Activated CD4-positive, alpha-beta T cell treated with anti-CD3 and anti-CD28 coated beads for 36 hours (primary cell): ENCODE measurements at regions of chr7 and their contacts with region 1.

Region 1: GRCh38 chr7:129271500-129272355 is 46.9 kb downstream of the AHCYL2 start:
- DNase-seq: peak; percentile 76
- ATAC-seq: peak; percentile 97
- H3K4me3 Mint-ChIP-seq: no peak overlapping the region
- H3K27ac Mint-ChIP-seq: peak overlapping the region; percentile 53
- H3K4me1 Mint-ChIP-seq: peaks cover 6% of the 10 kb centered on the region
- H3K27me3 Mint-ChIP-seq: no peaks in the 10 kb centered on the region

Region 2: GRCh38 chr7:128791121-128791961 is 480.4 kb before region 1 on chr7:
- CTCF ChIA-PET with region 1: no interaction called
- POLR2A ChIA-PET with region 1: no interaction called
- intact Hi-C with region 1: no loop called
- DNase-seq: peak; percentile 88
- ATAC-seq: peak; percentile 91
- H3K4me3 Mint-ChIP-seq: peak overlapping the region; percentile 75
- H3K27ac Mint-ChIP-seq: peak overlapping the region; percentile 28
- H3K4me1 Mint-ChIP-seq: peaks cover 5% of the 10 kb centered on the region
- H3K27me3 Mint-ChIP-seq: peaks cover 9% of the 10 kb centered on the region

Region 3: GRCh38 chr7:129169171-129169671 is 102.5 kb before region 1 on chr7:
- CTCF ChIA-PET with region 1: interaction called, 8 read pairs
- POLR2A ChIA-PET with region 1: no interaction called
- intact Hi-C with region 1: loop called (anchors 2 to 5 kb)
- DNase-seq: peak; percentile 55
- ATAC-seq: peak; percentile 60
- H3K4me3 Mint-ChIP-seq: peak overlapping the region; percentile 45
- H3K27ac Mint-ChIP-seq: peak overlapping the region; percentile 28
- H3K4me1 Mint-ChIP-seq: peaks cover 15% of the 10 kb centered on the region
- H3K27me3 Mint-ChIP-seq: peaks cover 2% of the 10 kb centered on the region

Region 4: GRCh38 chr7:129210256-129210988 is 61.3 kb before region 1 on chr7:
- CTCF ChIA-PET with region 1: interaction called, 10 read pairs
- POLR2A ChIA-PET with region 1: no interaction called
- intact Hi-C with region 1: no loop called
- DNase-seq: peak; percentile 87
- ATAC-seq: peak; percentile 92
- H3K4me3 Mint-ChIP-seq: no peak overlapping the region
- H3K27ac Mint-ChIP-seq: no peak overlapping the region
- H3K4me1 Mint-ChIP-seq: no peaks in the 10 kb centered on the region
- H3K27me3 Mint-ChIP-seq: no peaks in the 10 kb centered on the region

Region 5: GRCh38 chr7:129258649-129259389 is 12.9 kb before region 1 on chr7:
- CTCF ChIA-PET with region 1: interaction called, 41 read pairs
- POLR2A ChIA-PET with region 1: no interaction called
- intact Hi-C with region 1: no loop called
- DNase-seq: no peak
- ATAC-seq: peak; percentile 51
- H3K4me3 Mint-ChIP-seq: no peak overlapping the region
- H3K27ac Mint-ChIP-seq: no peak overlapping the region
- H3K4me1 Mint-ChIP-seq: peaks cover 30% of the 10 kb centered on the region
- H3K27me3 Mint-ChIP-seq: no peaks in the 10 kb centered on the region

Region 6: GRCh38 chr7:129285111-129285510 is 13.4 kb after region 1 on chr7:
- CTCF ChIA-PET with region 1: interaction called, 20 read pairs
- POLR2A ChIA-PET with region 1: no interaction called
- intact Hi-C with region 1: no loop called
- DNase-seq: no peak
- ATAC-seq: no peak
- H3K4me3 Mint-ChIP-seq: no peak overlapping the region
- H3K27ac Mint-ChIP-seq: no peak overlapping the region
- H3K4me1 Mint-ChIP-seq: no peaks in the 10 kb centered on the region
- H3K27me3 Mint-ChIP-seq: no peaks in the 10 kb centered on the region